Left colon (tissue), 2 donors: ENCODE measurements at regions of chr17 and their contacts with region 1.

Region 1: GRCh38 chr17:41885733-41886132 is 20.5 kb upstream of the KLHL11 start:
- DNase-seq: no peak
- ATAC-seq: no peak

Region 2: DNA sequence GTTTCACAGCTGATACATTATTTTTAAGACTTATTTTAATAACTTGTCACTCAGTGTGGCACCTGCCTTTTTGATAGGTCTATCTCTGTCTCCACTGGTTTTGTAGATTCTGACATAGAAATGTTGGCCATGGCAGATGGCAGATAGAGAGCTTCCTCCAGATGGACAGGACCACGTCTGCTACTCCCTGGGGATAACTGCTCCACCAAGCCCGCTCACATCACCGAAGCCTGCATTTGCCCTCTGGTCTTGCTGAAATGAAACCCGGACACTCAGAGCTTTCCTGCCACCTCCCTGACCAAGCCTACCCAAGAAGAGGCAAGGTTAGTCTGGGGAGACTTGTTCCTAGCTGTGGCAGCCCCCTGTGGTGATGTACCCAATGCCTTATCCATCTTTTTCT is 134.9 kb before region 1 on chr17:
- intact Hi-C with region 1: loop called in 1 of 2 experiments (anchors 10 kb)
- DNase-seq: no peak
- ATAC-seq: peak; percentile 2